ENCODE measurements at regions of chr5 and their contacts with region 1.

Region 1: GRCh38 chr5:148443998-148444397 is 60.2 kb downstream of the FBXO38 start:
- DNase-seq: peak in 1 of 2 donors; percentile 70
- ATAC-seq: peak; percentile 79 to 85 (median 83)
- H3K4me3 ChIP-seq: no peak overlapping the region
- H3K4me3 Mint-ChIP-seq: no peak overlapping the region
- H3K27ac ChIP-seq: no peak overlapping the region
- H3K27ac Mint-ChIP-seq: peak overlapping the region in 1 of 2 donors; percentile 57
- H3K4me1 ChIP-seq: no peaks in the 10 kb centered on the region
- H3K4me1 Mint-ChIP-seq: peaks cover 0 to 5% of the 10 kb centered on the region in 2 donors
- H3K27me3 ChIP-seq: no peaks in the 10 kb centered on the region
- H3K27me3 Mint-ChIP-seq: no peaks in the 10 kb centered on the region
- CTCF ChIP-seq: peak; percentile 85

Region 2: DNA sequence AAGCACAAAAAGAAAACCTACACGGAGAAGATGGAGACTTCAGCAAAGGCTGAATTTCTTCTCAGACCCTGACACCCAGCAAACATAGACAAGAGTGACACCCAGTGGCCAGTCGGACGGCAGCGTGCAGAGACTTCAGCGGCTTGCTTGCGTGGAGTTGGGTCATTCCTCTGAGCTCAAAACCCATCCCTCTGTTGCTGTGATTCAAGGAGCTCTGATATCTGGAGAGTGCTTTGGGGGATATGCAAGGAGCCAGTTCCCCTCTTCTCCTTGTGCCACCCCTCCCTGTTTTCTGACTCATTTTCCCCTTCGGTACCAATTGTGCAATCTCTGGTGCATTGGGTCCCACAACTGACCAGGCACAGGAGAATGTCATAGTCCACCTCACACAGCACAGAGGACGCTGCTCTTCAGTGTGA is 591.4 kb after region 1 on chr5:
- intact Hi-C with region 1: loop called (anchors 1 kb)
- DNase-seq: peak; percentile 61 to 80
- ATAC-seq: peak; percentile 79 to 89 (median 87)
- H3K4me3 ChIP-seq: no peak overlapping the region
- H3K4me3 Mint-ChIP-seq: no peak overlapping the region
- H3K27ac ChIP-seq: no peak overlapping the region
- H3K27ac Mint-ChIP-seq: no peak overlapping the region
- H3K4me1 ChIP-seq: peaks cover 12% of the 10 kb centered on the region
- H3K4me1 Mint-ChIP-seq: peaks cover 36 to 49% of the 10 kb centered on the region in 2 donors
- H3K27me3 ChIP-seq: no peaks in the 10 kb centered on the region
- H3K27me3 Mint-ChIP-seq: no peaks in the 10 kb centered on the region
- CTCF ChIP-seq: peak; percentile 84